CD14-positive monocyte (primary cell): ENCODE measurements at regions of chr17 and their contacts with region 1.

Region 1: GRCh38 chr17:80147035-80147836 is at the start of gene EIF4A3:
- DNase-seq: peak; percentile 98 to 99 (median 99)
- H3K4me3 ChIP-seq: peak within 1 kb of the TSS; percentile 70 to 93 (median 88)
- H3K4me3 Mint-ChIP-seq: peak within 1 kb of the TSS; percentile 81 to 95
- H3K27ac ChIP-seq: peak within 1 kb of the TSS; percentile 70 to 89
- H3K27ac Mint-ChIP-seq: peak within 1 kb of the TSS; percentile 87 to 97 (median 93)
- H3K4me1 ChIP-seq: peaks cover 33 to 42% of the 10 kb centered on the region in 2 donors
- H3K4me1 Mint-ChIP-seq: peaks cover 39% of the 10 kb centered on the region
- H3K27me3 ChIP-seq: no peaks in the 10 kb centered on the region
- H3K27me3 Mint-ChIP-seq: peaks cover 0 to 2% (median 0%) of the 10 kb centered on the region in 3 donors
- CTCF ChIP-seq: no peak
- polyA plus RNA-seq, gene EIF4A3: 101 to 180 (median 106) TPM

Region 2: DNA sequence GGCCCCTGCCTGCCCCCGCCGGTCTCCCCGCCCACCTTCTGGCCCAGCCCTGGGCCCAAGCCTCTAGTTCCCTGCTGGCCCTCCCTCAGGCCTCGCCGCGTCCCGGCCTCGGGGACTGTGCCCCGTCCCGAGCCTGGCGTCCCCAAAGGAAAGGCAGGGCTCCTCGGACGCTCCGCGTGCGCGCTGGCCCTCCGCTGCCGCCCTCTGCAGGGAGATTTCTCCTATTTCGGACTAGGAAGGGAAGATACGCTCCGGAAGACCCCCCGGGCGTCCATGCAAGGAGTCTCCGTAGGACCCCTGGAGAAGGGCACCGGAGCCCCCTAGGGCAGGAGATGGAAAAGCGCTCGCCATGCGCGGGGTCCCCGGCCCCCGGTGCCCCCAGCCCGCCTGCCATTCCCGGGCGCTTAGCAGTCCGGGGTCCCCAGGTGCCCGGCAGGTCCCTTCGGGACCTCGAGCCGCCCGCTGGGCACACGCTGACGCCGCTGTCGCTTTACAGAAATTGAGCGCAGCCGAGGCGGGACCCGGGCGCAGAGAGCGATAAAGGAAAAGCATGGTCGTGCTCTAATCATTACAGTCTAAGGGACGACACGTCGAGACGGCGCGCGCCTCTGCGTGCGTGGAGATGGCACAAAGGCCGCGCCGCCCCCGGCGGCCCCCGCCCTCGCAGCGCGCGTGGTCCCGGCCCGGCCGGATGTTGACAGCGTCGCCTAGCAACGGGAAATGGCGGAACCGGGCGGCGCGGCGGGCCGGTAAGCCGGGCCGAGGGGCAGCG is 111.1 kb before region 1 on chr17 and contains the start of gene CCDC40:
- intact Hi-C with region 1: loop called in 1 of 2 experiments (anchors 10 kb)
- DNase-seq: peak; percentile 72 to 84 (median 77)
- H3K4me3 ChIP-seq: peak within 1 kb of the TSS; percentile 58 to 75 (median 62)
- H3K4me3 Mint-ChIP-seq: peak within 1 kb of the TSS; percentile 82 to 94
- H3K27ac ChIP-seq: peak within 1 kb of the TSS; percentile 30 to 75
- H3K27ac Mint-ChIP-seq: peak within 1 kb of the TSS; percentile 32 to 94 (median 90)
- H3K4me1 ChIP-seq: peaks cover 20 to 24% of the 10 kb centered on the region in 2 donors
- H3K4me1 Mint-ChIP-seq: peaks cover 21% of the 10 kb centered on the region
- H3K27me3 ChIP-seq: peaks cover 22 to 44% of the 10 kb centered on the region in 2 donors
- H3K27me3 Mint-ChIP-seq: peaks cover 42 to 64% (median 49%) of the 10 kb centered on the region in 3 donors
- CTCF ChIP-seq: no peak
- polyA plus RNA-seq, gene CCDC40: 0.21 to 0.27 TPM in 2 of 3 donors, not detected in the other

Region 3: DNA sequence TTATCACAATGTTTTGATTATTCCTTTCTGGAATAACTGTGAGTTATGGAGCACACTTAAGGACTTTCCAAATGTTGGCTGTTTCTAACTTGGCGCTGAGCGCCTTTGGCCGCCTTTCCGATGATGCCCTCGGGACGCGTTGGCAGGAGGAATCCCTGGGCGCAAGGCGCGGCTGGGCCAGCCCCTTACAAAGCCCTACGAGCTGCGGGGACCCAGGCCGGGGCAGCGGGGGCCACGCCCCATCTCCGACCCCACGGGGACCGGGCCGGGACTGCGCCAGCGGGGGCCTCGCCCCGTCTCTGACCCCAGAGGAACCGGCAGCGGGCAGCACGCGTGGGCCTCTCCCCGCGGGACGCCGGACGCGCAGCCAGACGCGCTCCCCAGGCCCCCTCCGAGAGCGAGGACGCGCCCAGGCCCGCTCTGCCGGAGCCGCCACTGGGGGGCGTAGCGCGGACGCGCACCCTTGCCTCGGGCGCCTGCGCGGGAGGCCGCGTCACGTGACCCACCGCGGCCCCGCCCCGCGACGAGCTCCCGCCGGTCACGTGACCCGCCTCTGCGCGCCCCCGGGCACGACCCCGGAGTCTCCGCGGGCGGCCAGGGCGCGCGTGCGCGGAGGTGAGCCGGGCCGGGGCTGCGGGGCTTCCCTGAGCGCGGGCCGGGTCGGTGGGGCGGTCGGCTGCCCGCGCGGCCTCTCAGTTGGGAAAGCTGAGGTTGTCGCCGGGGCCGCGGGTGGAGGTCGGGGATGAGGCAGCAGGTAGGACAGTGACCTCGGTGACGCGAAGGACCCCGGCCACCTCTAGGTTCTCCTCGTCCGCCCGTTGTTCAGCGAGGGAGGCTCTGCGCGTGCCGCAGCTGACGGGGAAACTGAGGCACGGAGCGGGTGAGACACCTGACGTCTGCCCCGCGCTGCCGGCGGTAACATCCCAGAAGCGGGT is 46.0 kb before region 1 on chr17 and contains the start of gene GAA:
- intact Hi-C with region 1: loop called (anchors 2 kb)
- DNase-seq: peak; percentile 80 to 86 (median 82)
- H3K4me3 ChIP-seq: peak within 1 kb of the TSS; percentile 80 to 96 (median 91)
- H3K4me3 Mint-ChIP-seq: peak within 1 kb of the TSS; percentile 93 to 96
- H3K27ac ChIP-seq: peak within 1 kb of the TSS; percentile 87 to 94
- H3K27ac Mint-ChIP-seq: peak within 1 kb of the TSS; percentile 91 to 96 (median 95)
- H3K4me1 ChIP-seq: peaks cover 23 to 27% of the 10 kb centered on the region in 2 donors
- H3K4me1 Mint-ChIP-seq: peaks cover 34% of the 10 kb centered on the region
- H3K27me3 ChIP-seq: no peaks in the 10 kb centered on the region
- H3K27me3 Mint-ChIP-seq: peaks cover 0 to 2% (median 1%) of the 10 kb centered on the region in 3 donors
- CTCF ChIP-seq: peak; percentile 88
- polyA plus RNA-seq, gene GAA: 116 to 140 (median 120) TPM